ENCODE measurements at regions of chr12 and their contacts with region 1.

Region 1: DNA sequence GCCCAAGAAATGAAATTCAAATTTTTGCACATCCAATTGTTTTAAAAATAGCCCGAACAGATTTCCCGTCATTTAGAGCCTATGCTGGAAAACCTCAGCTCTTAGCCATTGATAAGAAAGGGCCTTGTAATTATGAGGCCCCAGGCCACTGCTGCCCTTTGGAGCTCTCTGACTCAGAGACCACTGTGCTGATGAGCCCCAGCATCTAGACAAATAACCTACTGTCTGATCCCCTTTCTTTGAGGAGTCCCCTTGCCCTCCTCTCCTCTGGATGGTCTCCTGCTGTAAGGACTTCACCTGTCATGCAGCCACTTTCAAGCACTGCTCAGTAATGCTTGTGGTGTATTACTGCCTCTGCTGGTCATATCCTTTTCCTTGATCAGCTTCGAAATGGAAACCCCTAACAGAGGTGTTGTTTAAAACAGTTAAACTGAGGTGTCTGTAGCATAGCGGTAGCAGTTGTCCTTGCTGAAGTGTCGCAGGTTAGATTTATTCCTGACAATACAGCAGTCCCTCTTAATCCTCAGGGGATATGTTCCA is 159.9 kb upstream of the SRRM4 start:
- DNase-seq: no peak
- ATAC-seq: no peak

Region 2: GRCh38 chr12:117318591-117318990 is 1502.9 kb before region 1 on chr12:
- intact Hi-C with region 1: loop called (anchors 5 kb)
- DNase-seq: no peak
- ATAC-seq: peak; percentile 67

Region 3: DNA sequence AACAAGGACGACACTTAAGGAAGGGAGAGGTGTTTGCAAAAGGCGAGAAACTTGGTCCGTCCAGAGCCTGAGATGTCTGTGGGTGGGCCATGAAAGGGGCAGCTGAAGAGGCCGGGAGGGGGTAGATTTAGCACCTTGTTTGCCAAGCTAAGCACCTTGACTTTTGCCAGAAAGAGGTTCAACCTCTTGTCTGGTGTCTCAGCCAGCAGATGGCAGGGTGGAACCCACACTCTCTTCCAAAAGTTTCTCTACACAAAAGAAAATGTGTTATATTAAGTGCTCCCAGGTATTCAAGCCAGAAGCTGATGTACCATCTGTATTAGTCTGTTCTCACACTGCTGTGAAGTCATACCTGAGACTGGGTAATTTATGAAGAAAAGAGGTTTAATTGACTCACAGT is 375.2 kb before region 1 on chr12:
- intact Hi-C with region 1: no loop called
- DNase-seq: no peak
- ATAC-seq: no peak

Region 4: GRCh38 chr12:118704527-118705241 is 116.8 kb before region 1 on chr12:
- intact Hi-C with region 1: no loop called
- DNase-seq: no peak
- ATAC-seq: no peak

Region 5: GRCh38 chr12:118835926-118836325 is 14.5 kb after region 1 on chr12:
- intact Hi-C with region 1: no loop called
- DNase-seq: no peak
- ATAC-seq: no peak

Measured in sciatic nerve (tissue), 2 donors.